GM12878 (cell line): ENCODE measurements at regions of chr17 and their contacts with region 1.

Region 1: DNA sequence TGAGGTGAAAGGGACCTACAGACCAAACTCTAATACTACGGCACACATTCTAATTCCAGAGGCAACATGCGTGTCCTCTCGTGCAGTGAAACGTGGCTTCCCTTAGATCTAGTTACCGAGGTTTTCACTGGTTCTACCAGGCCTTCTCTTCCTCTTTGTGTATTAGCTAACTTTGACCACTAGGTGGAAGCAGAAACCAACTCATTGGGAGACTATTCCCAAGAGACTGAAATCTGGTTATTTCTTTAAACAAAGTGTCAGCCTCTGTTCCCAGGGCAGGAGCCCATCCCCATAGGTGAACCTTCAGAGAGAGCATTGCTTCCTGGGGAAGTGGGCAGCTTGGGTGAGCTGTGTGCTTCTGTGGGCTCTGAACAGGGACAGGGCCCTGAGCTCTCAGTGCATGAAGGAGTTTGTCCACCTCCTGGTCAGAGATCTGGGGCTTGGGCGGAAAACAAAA is 19.7 kb upstream of the RCVRN start:
- DNase-seq: peak; percentile 48
- ATAC-seq: peak; percentile 88
- H3K4me3 ChIP-seq: no peak overlapping the region
- H3K27ac ChIP-seq: no peak overlapping the region
- H3K4me1 ChIP-seq: no peaks in the 10 kb centered on the region
- H3K27me3 ChIP-seq: no peaks in the 10 kb centered on the region
- CTCF ChIP-seq: peak; percentile 78 to 90 (median 82); a peak in 4 of 6 replicates
- EP300 ChIP-seq: no peak
- POLR2A ChIP-seq: no peak
- RAD21 ChIP-seq: peak; percentile 91

Region 2: DNA sequence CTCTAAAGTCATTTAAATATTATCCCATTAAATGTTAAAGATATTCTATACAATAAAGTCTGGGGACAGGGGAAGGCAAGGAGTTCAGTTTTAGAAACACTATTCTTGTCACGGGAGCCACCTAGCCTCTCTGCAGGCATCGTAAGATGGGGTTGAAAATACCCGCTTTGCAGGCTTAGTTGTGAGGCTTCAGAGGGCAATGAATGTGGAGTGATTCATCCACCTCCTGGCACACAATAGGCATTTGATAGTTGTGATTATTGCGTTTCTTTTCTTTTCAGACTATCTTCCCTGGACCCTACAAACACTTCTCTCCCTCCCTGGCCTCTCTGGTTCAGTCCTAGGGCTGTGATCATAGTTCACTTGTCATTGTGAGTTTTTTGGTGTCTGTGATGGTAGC is 79.5 kb before region 1 on chr17:
- CTCF ChIA-PET with region 1: no interaction called
- POLR2A ChIA-PET with region 1: no interaction called
- RAD21 ChIA-PET with region 1: no interaction called
- SMC1A ChIA-PET with region 1: no interaction called
- in situ Hi-C with region 1: no loop called
- intact Hi-C with region 1: no loop called
- DNase-seq: no peak
- ATAC-seq: no peak
- H3K4me3 ChIP-seq: no peak overlapping the region
- H3K27ac ChIP-seq: no peak overlapping the region
- H3K4me1 ChIP-seq: no peaks in the 10 kb centered on the region
- H3K27me3 ChIP-seq: no peaks in the 10 kb centered on the region
- CTCF ChIP-seq: no peak
- EP300 ChIP-seq: no peak
- POLR2A ChIP-seq: no peak
- RAD21 ChIP-seq: no peak

Region 3: DNA sequence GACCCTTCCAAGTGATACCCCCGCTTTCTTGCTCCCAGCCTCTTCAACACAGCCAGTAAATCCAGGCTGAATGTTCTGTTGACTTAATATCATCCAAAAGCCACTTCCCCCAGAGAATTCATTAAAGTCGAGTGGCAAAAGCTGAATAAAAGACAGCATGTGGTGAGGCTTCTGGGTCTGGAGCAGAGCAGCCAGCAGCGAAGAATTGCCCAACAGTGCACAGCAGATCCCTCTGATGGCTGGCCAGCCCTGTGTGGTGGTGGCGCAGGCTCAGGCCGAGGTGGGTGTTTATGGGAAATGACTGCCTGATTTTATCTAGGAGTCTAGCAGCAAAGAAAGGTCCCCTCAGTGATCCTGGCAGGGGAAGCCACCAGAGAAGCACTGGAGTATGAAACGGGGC is 10.6 kb after region 1 on chr17:
- CTCF ChIA-PET with region 1: interaction called, 15 read pairs
- POLR2A ChIA-PET with region 1: no interaction called
- RAD21 ChIA-PET with region 1: interaction called, 3 read pairs
- SMC1A ChIA-PET with region 1: no interaction called
- in situ Hi-C with region 1: no loop called
- intact Hi-C with region 1: no loop called
- DNase-seq: no peak
- ATAC-seq: no peak
- H3K4me3 ChIP-seq: no peak overlapping the region
- H3K27ac ChIP-seq: no peak overlapping the region
- H3K4me1 ChIP-seq: no peaks in the 10 kb centered on the region
- H3K27me3 ChIP-seq: no peaks in the 10 kb centered on the region; a peak in 1 of 4 replicates
- CTCF ChIP-seq: no peak
- EP300 ChIP-seq: no peak
- POLR2A ChIP-seq: no peak
- RAD21 ChIP-seq: no peak

Region 4: GRCh38 chr17:9959377-9959981 is 34.7 kb after region 1 on chr17:
- CTCF ChIA-PET with region 1: interaction called, 11 read pairs
- POLR2A ChIA-PET with region 1: no interaction called
- RAD21 ChIA-PET with region 1: no interaction called
- SMC1A ChIA-PET with region 1: no interaction called
- in situ Hi-C with region 1: no loop called
- intact Hi-C with region 1: loop called (anchors 1 kb)
- DNase-seq: no peak
- ATAC-seq: peak; percentile 74
- H3K4me3 ChIP-seq: no peak overlapping the region
- H3K27ac ChIP-seq: no peak overlapping the region
- H3K4me1 ChIP-seq: no peaks in the 10 kb centered on the region
- H3K27me3 ChIP-seq: no peaks in the 10 kb centered on the region
- CTCF ChIP-seq: peak; percentile 52 to 59 (median 52); a peak in 5 of 6 replicates
- EP300 ChIP-seq: no peak
- POLR2A ChIP-seq: no peak
- RAD21 ChIP-seq: peak; percentile 29; the same call in 1 of the 2 replicates

Region 5: DNA sequence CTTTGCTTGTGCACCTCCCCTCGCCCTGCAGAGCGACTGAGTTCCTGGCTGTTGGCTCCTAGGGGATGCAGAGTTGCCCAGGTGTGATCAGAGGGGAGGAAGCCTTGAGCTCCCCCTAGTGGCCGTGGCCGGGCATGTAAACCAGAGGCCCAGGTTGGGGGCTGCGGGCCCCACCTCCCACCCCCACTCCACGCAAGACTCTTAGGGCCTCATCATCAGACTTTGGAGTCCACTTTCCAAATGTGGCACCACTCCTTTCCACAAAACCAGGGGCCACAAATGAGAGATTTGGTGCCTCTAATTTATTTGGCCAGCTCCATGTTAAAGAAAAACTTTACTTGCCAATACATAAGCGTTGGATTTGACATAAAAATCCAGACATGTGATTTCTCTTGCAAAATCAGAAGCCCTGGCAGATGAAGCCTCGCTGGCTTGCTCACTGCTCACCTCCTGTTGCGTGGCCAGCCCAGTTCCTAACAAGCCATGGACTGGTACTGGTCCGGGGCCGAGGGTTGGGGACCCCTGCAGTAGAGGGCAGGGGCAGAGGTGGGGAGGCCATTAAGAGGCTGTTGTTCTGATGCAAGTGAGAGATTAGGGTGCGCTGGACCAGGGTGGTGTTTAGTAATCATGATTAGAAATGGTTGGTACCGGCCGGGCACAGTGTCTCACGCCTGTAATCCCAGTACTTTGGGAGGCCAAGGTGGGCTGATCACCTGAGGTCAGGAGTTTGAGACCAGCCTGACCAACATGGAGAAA is 302.3 kb after region 1 on chr17:
- CTCF ChIA-PET with region 1: interaction called, 28 read pairs
- POLR2A ChIA-PET with region 1: no interaction called
- RAD21 ChIA-PET with region 1: interaction called, 18 read pairs
- SMC1A ChIA-PET with region 1: interaction called, 6 read pairs
- in situ Hi-C with region 1: no loop called
- intact Hi-C with region 1: loop called (anchors 2 kb)
- DNase-seq: no peak
- ATAC-seq: peak; percentile 97
- H3K4me3 ChIP-seq: no peak overlapping the region
- H3K27ac ChIP-seq: no peak overlapping the region
- H3K4me1 ChIP-seq: no peaks in the 10 kb centered on the region; the same call in 1 of the 2 replicates
- H3K27me3 ChIP-seq: no peaks in the 10 kb centered on the region
- CTCF ChIP-seq: peak; percentile 85 to 98 (median 85)
- EP300 ChIP-seq: no peak
- POLR2A ChIP-seq: no peak
- RAD21 ChIP-seq: peak; percentile 70

Region 6: GRCh38 chr17:10295728-10296343 is 371.1 kb after region 1 on chr17:
- CTCF ChIA-PET with region 1: interaction called, 4 read pairs
- POLR2A ChIA-PET with region 1: no interaction called
- RAD21 ChIA-PET with region 1: interaction called, 3 read pairs
- SMC1A ChIA-PET with region 1: no interaction called
- in situ Hi-C with region 1: no loop called
- intact Hi-C with region 1: loop called (anchors 10 kb)
- DNase-seq: peak; percentile 21
- ATAC-seq: peak; percentile 77
- H3K4me3 ChIP-seq: no peak overlapping the region
- H3K27ac ChIP-seq: no peak overlapping the region
- H3K4me1 ChIP-seq: peaks cover 17% of the 10 kb centered on the region; the same call in 1 of the 2 replicates
- H3K27me3 ChIP-seq: no peaks in the 10 kb centered on the region
- CTCF ChIP-seq: peak; percentile 72 to 79 (median 77)
- EP300 ChIP-seq: no peak
- POLR2A ChIP-seq: no peak
- RAD21 ChIP-seq: peak; percentile 58